Activated CD4-positive, alpha-beta T cell treated with anti-CD3 and anti-CD28 coated beads for 36 hours (primary cell): ENCODE measurements at regions of chr6 and their contacts with region 1.

Region 1: DNA sequence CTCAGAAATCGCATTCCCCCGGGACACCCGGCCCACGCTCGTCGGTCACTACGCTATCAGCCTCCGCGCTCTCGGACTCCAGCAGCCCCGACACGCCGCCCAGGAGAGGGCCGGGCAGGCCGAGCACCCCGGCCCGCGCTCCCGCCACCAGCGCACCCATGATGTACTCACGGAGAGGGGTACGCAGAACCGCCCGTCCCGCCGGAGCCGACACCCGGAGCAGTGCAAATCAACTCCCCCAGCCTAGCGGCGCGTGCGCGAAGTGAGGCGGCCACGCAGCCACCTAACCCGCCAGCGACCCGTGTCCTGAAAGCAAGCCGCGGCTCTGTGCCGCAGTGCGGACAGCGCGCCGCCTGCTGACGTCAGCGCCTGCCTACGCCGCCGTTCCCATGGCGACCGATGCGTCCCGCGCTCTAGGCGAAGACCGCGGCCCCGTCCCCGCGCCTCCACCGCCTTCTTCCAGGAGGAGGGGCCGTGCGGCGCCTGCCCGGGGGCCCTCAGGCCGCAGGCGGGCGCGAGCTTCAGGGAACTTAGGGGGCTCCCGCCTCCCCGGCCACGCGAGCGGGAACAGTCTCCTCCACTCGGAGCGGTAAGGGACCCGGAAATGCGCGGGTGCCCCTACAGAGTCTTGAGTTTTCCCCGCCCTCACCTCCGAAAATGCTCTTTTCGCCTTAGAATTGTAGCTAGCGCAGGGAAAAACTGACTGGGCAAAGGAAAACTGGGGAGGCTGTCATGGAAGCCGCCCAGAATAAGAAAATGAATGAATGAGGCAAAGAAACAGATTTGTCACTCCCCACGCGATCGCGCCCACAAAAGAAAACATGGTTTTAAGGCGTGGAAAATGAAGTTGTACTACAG is at the start of gene AHI1:
- DNase-seq: peak; percentile 94
- ATAC-seq: peak; percentile 81
- H3K4me3 Mint-ChIP-seq: no peak within 1 kb of the TSS
- H3K27ac Mint-ChIP-seq: peak within 1 kb of the TSS; percentile 94
- H3K4me1 Mint-ChIP-seq: peaks cover 7% of the 10 kb centered on the region
- H3K27me3 Mint-ChIP-seq: no peaks in the 10 kb centered on the region
- total RNA-seq, gene AHI1: 35.6 to 36.0 TPM

Region 2: DNA sequence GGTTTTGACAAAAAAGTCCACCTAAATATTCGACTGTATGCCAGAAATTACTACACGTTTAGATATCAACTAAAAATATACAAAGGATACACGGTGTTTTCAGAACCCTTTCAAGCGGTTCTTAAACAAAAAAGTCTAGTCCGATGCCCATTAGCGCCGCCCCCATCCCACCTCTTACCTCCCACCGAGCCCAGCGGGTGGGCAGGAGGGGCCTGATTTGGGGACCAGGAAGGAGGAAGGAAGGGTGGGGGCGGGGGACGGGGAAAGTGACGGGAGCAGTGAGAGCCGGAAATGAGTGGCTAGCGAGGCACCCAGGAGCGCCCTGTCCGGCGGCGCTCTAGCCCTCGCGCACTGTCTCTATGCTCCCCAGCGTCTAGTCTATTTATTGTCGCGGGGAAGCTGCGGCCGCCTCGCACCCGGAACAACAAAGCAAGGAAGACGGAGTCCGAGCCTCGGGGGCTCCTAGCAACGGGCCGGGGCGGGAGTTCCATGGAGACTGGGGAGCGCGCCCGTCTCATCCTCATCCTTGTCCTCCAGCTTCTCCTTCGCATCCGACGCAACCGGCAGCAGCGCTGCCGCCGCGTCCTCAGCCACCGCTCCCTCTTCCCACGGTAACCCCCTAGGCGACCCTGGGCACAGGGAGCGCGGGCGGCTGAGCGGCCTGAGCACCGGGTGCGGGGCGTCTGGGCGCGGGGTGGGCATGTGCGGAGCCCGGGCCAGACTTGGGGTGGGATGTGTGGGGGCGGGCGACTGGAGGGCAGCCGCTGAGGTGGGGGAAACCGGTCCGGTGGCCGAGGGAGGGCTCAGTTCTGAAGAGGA is 1544.6 kb before region 1 on chr6 and contains the start of gene TBPL1:
- CTCF ChIA-PET with region 1: no interaction called
- POLR2A ChIA-PET with region 1: no interaction called
- intact Hi-C with region 1: loop called in 1 of 2 experiments (anchors 5 kb)
- DNase-seq: peak; percentile 92
- ATAC-seq: peak; percentile 90
- H3K4me3 Mint-ChIP-seq: peak within 1 kb of the TSS; percentile 98
- H3K27ac Mint-ChIP-seq: peak within 1 kb of the TSS; percentile 93
- H3K4me1 Mint-ChIP-seq: peaks cover 38% of the 10 kb centered on the region
- H3K27me3 Mint-ChIP-seq: no peaks in the 10 kb centered on the region
- total RNA-seq, gene TBPL1: 32.2 to 33.9 TPM

Region 3: DNA sequence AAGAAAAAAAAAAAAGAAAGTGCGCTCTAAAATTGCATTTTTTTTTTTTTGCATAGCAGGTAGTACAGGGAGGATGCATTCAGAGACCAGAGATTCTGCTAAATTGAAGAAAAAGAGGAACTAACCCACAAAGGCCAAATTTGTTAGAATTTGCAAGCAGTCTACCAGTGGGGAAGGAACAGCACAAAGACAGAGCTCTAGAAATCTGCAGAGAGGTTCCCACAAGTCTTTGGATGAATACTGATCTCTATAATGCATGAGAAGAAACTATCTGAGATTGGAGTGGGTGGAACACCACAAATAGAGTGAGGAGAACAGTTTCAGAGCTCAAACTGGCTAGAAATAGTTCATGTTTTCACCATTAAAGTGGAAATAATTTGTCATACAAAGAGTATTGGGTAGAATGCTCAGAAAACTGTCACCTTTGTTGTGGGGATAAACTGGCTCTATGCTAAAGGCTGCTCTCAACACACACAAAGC is 79.5 kb after region 1 on chr6:
- CTCF ChIA-PET with region 1: no interaction called
- POLR2A ChIA-PET with region 1: interaction called, 12 read pairs
- intact Hi-C with region 1: no loop called
- DNase-seq: no peak
- ATAC-seq: peak; percentile 94
- H3K4me3 Mint-ChIP-seq: peak overlapping the region; percentile 8
- H3K27ac Mint-ChIP-seq: peak overlapping the region; percentile 70
- H3K4me1 Mint-ChIP-seq: peaks cover 23% of the 10 kb centered on the region
- H3K27me3 Mint-ChIP-seq: no peaks in the 10 kb centered on the region

Region 4: GRCh38 chr6:135610192-135610815 is 112.7 kb after region 1 on chr6:
- CTCF ChIA-PET with region 1: no interaction called
- POLR2A ChIA-PET with region 1: no interaction called
- intact Hi-C with region 1: no loop called
- DNase-seq: no peak
- ATAC-seq: no peak
- H3K4me3 Mint-ChIP-seq: no peak overlapping the region
- H3K27ac Mint-ChIP-seq: no peak overlapping the region
- H3K4me1 Mint-ChIP-seq: peaks cover 16% of the 10 kb centered on the region
- H3K27me3 Mint-ChIP-seq: peaks cover 2% of the 10 kb centered on the region

Region 5: DNA sequence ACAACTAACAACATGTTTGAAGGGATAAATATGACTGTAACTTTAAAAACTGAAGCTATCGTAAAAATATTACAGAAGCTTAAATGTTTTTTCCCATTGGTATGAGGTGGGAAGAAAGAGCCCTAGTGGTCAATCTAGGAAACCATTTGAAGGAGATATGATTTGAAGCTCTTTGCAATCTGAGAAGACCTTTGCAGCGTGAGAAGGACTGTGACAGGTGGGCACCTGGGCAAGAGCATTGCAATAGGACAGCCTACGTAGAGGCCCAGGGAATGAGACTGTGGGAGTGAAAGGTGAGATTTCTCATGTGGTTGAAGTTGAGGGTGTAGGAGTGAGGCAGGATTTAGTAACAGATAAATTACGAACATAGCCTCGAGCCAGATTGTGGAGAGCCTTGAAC is 245.8 kb after region 1 on chr6:
- CTCF ChIA-PET with region 1: no interaction called
- POLR2A ChIA-PET with region 1: no interaction called
- intact Hi-C with region 1: no loop called
- DNase-seq: no peak
- ATAC-seq: no peak
- H3K4me3 Mint-ChIP-seq: no peak overlapping the region
- H3K27ac Mint-ChIP-seq: no peak overlapping the region
- H3K4me1 Mint-ChIP-seq: peaks cover 4% of the 10 kb centered on the region
- H3K27me3 Mint-ChIP-seq: peaks cover 2% of the 10 kb centered on the region

Region 6: DNA sequence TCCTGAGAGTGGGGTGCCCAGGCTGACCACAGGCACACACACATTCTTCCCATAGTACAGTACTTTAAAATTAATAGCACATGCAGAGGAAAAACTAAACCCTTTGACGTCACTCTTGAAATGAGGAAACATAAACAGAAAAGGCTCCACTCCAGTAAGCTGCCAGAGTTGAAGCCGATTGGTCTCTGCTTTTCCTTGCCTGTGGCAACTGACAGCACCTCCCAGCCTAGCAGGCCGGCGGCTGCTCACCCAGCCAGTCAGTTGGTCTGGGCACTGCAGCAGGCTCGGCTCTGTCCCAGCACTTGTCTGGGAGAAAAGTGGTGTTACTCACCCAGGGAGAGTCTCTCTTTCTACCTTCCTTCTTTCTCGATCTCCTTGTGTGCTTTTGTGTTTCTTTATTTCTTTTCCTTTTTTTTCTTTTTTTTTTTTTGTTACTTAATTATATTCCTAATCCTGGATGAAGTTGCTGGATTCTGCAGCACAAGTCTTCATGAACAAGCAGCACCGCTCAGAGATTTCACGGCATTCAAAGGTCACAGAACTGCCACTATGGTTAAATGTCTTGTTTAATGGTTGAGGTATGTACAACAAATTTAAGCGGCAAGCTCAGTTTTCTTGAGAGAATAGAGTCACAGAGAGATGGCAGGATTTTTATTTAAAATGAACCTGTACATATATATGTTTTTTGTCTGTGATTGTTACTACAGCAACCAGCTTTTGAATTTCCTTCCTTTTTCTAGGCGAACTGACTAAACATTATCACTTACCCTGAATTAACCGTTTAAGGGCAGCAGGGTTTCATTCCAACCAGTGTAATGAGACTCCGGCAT is 354.0 kb after region 1 on chr6 and contains the start of gene PDE7B:
- CTCF ChIA-PET with region 1: no interaction called
- POLR2A ChIA-PET with region 1: interaction called, 5 read pairs
- intact Hi-C with region 1: loop called in 1 of 2 experiments (anchors 5 kb)
- DNase-seq: peak; percentile 73
- ATAC-seq: peak; percentile 91
- H3K4me3 Mint-ChIP-seq: peak within 1 kb of the TSS; percentile 66
- H3K27ac Mint-ChIP-seq: peak within 1 kb of the TSS; percentile 56
- H3K4me1 Mint-ChIP-seq: peaks cover 31% of the 10 kb centered on the region
- H3K27me3 Mint-ChIP-seq: no peaks in the 10 kb centered on the region
- total RNA-seq, gene PDE7B: 0.73 to 1.1 TPM

Region 7: DNA sequence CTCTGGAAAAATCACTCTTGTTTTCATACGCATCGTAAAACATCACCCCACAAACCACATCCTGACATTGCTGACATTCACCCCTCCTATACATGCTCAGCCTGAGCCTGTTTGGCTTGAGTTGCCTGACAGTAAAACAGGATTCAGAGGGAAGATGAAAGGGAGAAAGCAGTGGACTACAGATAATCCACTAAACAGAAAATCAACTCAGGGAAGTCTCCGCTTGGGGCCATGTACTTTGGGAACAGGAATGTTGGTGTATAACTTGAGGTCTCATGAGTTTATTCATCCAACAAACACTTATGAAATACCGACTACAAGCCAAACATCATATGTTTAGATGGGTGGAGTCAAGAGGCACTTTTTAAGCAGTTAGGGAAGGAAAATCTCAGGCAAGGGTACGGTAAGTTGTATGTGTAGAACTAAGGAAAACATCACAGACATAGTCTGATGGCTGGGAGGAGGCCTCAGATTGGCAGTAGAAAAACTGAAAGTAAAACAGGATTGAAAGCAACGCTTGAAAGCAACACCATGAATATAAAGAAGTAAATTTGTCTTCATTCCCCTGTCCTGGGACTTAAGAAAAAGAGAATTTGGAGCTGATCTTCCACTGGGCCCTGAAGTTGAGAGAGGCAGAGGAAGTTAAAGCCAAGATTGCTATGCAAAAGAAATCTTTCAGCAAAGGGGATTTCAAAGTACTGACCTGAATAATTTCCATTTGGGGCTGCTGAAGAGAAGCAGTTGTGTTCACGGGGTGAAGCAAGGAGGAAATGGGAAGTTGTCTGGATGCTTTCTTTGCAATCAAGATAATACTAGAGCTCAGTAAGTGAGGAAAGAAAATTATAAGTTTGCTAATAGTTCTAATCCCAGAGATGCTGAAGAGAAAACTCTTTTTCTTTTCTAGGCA is 382.7 kb after region 1 on chr6:
- CTCF ChIA-PET with region 1: no interaction called
- POLR2A ChIA-PET with region 1: no interaction called
- intact Hi-C with region 1: loop called in 1 of 2 experiments (anchors 1 kb)
- DNase-seq: peak; percentile 68
- ATAC-seq: peak; percentile 92
- H3K4me3 Mint-ChIP-seq: peak overlapping the region; percentile 72
- H3K27ac Mint-ChIP-seq: peak overlapping the region; percentile 98
- H3K4me1 Mint-ChIP-seq: peaks cover 67% of the 10 kb centered on the region
- H3K27me3 Mint-ChIP-seq: no peaks in the 10 kb centered on the region

Region 8: GRCh38 chr6:136289579-136290409 is 792.2 kb after region 1 on chr6 and contains the start of gene BCLAF1:
- CTCF ChIA-PET with region 1: interaction called, 5 read pairs
- POLR2A ChIA-PET with region 1: interaction called, 10 read pairs
- intact Hi-C with region 1: loop called (anchors 1 kb)
- DNase-seq: peak; percentile 100
- ATAC-seq: peak; percentile 83
- H3K4me3 Mint-ChIP-seq: peak within 1 kb of the TSS; percentile 100
- H3K27ac Mint-ChIP-seq: peak within 1 kb of the TSS; percentile 100
- H3K4me1 Mint-ChIP-seq: peaks cover 37% of the 10 kb centered on the region
- H3K27me3 Mint-ChIP-seq: no peaks in the 10 kb centered on the region
- total RNA-seq, gene BCLAF1: 166 to 223 TPM

Region 9: DNA sequence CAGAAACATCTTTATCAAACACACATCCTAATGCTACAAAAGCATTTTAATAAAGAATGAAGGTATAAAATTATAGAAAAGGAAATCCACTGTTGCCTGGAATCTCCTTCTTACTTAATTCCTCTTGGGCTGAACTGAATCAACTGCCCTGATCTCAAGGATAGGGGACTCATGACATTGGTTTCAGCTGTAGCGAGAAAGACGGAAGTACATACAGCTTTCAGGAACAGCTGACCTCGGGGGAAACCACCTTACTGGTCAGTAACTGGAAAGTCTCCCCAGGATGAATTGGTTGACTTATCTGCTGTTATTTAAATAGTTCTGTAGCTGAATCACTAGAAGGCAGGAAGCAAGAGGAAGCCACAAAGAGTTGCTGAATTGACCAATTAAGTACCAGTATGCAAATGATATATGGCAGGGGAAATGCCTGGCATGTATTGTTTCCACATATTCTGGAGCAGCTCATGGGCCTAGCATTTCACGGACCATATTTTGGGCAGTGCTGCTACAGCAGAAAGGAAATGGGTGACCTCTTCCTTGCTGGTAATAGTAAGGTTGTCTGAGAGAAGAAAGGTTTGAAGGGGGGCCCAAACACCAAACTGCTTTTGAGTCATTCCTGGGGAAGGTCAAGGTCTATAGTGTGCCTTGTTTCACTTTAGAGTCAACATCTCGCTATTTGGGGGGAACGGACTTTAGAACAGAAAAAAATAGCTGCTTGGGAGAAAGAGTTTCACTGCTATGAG is 1096.3 kb after region 1 on chr6:
- CTCF ChIA-PET with region 1: no interaction called
- POLR2A ChIA-PET with region 1: interaction called, 3 read pairs
- intact Hi-C with region 1: loop called in 1 of 2 experiments (anchors 5 kb)
- DNase-seq: peak; percentile 70
- ATAC-seq: peak; percentile 92
- H3K4me3 Mint-ChIP-seq: peak overlapping the region; percentile 51
- H3K27ac Mint-ChIP-seq: peak overlapping the region; percentile 91
- H3K4me1 Mint-ChIP-seq: peaks cover 23% of the 10 kb centered on the region
- H3K27me3 Mint-ChIP-seq: no peaks in the 10 kb centered on the region